ENCODE measurements at regions of chr19 and their contacts with region 1.

Region 1: DNA sequence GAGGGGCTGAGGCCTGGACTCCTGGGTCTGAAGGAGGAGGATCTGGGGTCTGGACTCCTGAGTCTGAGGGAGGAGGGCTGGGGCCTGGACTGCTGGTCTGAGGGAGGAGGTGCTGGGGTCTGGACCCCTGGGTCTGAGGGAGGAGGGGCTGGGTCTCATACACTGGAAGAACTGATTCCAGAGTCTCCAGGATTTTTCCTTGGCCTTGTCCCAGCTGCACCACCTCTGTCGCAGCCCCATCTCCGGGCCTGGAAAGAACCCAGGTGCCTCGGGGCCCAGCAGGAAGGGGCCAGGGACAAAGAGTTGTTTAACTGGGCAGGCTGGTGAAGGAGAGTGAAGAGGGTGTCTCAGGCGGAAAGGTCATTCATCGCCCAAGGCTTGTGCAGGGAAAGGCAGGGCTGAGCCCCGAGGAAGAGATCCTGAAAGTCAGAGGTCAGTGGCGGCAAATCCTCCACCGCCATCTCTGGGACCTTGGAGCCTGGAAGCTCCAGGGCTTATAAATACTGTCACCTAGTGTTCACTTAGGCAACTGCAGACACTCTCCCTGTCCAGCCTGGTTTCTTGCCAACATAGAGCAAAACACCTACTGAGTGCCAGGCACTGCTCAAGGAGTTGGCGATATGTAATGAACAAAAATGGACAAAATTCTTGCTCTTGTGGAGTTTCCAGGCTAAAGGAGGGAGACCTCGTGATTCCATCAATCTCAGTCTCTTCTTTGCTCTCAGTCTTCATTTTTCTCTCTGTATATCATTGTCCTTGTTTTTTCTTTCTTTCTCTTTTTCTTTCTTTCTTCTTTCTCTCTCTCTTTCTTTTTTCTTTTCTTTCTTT is 4.4 kb upstream of the KCNN4 start:
- DNase-seq: no peak
- ATAC-seq: peak; percentile 81

Region 2: GRCh38 chr19:43747557-43748204 is 37.5 kb before region 1 on chr19:
- intact Hi-C with region 1: loop called (anchors 5 kb)
- DNase-seq: no peak
- ATAC-seq: no peak